ENCODE measurements at regions of chr7 and their contacts with region 1.

Region 1: GRCh38 chr7:128209229-128210035 is 31.6 kb upstream of the LEP start:
- DNase-seq: no peak
- H3K4me3 ChIP-seq: no peak overlapping the region
- H3K27me3 ChIP-seq: peaks cover 15% of the 10 kb centered on the region
- CTCF ChIP-seq: peak; percentile 97

Region 2: GRCh38 chr7:127504715-127505114 is 704.7 kb before region 1 on chr7:
- CTCF ChIA-PET with region 1: interaction called, 20 read pairs
- POLR2A ChIA-PET with region 1: no interaction called
- DNase-seq: no peak
- H3K4me3 ChIP-seq: no peak overlapping the region
- H3K27me3 ChIP-seq: no peaks in the 10 kb centered on the region; the same call in 1 of the 2 replicates
- CTCF ChIP-seq: peak; percentile 68

Region 3: GRCh38 chr7:127708788-127709187 is 500.6 kb before region 1 on chr7:
- CTCF ChIA-PET with region 1: interaction called, 136 read pairs
- POLR2A ChIA-PET with region 1: interaction called, 3 read pairs
- DNase-seq: peak; percentile 86
- H3K4me3 ChIP-seq: no peak overlapping the region
- H3K27me3 ChIP-seq: no peaks in the 10 kb centered on the region
- CTCF ChIP-seq: peak; percentile 66

Region 4: GRCh38 chr7:128240696-128241386 is 31.4 kb after region 1 on chr7 and contains the start of gene LEP:
- CTCF ChIA-PET with region 1: no interaction called
- POLR2A ChIA-PET with region 1: no interaction called
- DNase-seq: no peak
- H3K4me3 ChIP-seq: no peak within 1 kb of the TSS
- H3K27me3 ChIP-seq: peaks cover 21% of the 10 kb centered on the region
- CTCF ChIP-seq: no peak
- polyA plus RNA-seq, gene LEP: 0.05 TPM in 2 replicates

Region 5: DNA sequence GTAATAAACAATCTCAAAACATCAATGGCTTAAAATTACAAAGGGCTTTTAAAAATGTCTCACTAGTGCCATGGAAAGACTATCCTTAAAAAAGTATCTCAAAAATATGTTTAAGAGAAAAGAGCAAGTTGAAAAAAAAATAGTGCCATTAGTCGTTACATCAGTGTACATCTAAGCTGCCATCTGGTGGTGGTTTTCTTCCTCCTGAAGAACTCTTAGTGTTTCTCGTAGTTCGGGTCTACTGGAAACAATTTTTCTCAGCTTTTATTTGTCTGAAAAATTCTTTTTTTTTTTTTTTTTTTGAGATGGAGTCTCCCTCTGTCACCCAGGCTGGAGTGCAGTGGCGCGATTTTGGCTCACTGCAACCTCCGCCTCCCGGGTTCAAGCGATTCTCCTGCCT is 456.8 kb after region 1 on chr7:
- CTCF ChIA-PET with region 1: no interaction called
- POLR2A ChIA-PET with region 1: no interaction called
- DNase-seq: no peak
- H3K4me3 ChIP-seq: no peak overlapping the region
- H3K27me3 ChIP-seq: no peaks in the 10 kb centered on the region
- CTCF ChIP-seq: peak; percentile 36

Measured in BJ (cell line).